G401 (cell line): ENCODE measurements at regions of chr2 and their contacts with region 1.

Region 1: DNA sequence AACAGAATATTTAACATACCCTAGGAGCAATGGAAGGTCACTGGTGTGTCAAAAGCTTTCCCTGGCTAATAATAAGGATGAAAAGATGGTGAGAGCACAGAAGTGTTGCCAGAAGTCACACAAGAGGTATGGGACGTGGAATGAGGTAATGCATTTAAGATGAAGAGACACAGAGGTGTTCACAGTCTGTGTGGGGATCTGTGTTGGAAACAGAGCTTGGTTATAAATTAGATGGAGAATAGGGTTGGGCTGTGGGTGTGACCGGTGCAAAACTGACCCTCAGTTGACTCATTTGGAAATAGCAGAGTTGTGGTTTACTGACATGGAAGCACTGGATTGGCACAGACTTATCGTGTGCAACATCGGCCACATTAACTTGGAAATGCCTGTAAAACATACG is 372.5 kb downstream of the SATB2 start:
- DNase-seq: no peak

Region 2: DNA sequence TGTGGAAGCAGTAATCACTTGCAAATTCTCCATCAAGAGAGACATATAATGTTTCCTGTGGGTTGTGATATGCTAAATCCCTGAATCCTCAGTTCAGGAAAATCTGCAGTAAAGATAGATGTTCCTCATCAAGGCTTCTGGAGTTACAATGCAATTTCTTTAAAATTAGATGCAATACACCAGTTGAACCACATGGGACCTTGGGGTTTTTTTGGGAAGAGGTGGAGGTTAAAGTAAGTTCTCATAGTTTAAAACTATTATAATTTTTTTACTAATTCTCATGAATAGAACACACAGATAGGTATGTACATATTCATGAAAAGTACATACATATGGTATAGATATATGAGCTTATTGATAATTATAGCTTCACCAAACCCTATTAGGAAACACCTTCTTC is 123.7 kb before region 1 on chr2:
- in situ Hi-C with region 1: no loop called
- DNase-seq: no peak

Region 3: GRCh38 chr2:199144036-199144435 is 58.8 kb after region 1 on chr2:
- in situ Hi-C with region 1: loop called (anchors 5 kb)
- DNase-seq: no peak